Sigmoid colon (tissue), 7 donors: ENCODE measurements at regions of chr3 and their contacts with region 1.

Region 1: GRCh38 chr3:51498876-51499738 is 708 bp downstream of the DCAF1 start:
- DNase-seq: peak; percentile 98
- H3K4me3 ChIP-seq: peak overlapping the region; percentile 59 to 94 (median 92)
- H3K27ac ChIP-seq: peak overlapping the region; percentile 98 to 100 (median 98)
- H3K4me1 ChIP-seq: peaks cover 0 to 20% (median 11%) of the 10 kb centered on the region in 4 donors
- H3K27me3 ChIP-seq: no peaks in the 10 kb centered on the region
- CTCF ChIP-seq: no peak
- EP300 ChIP-seq: no peak
- POLR2A ChIP-seq: peak in 1 of 2 donors; percentile 31

Region 2: GRCh38 chr3:51391075-51391567 is 108.0 kb before region 1 on chr3 and contains the start of gene RBM15B:
- intact Hi-C with region 1: loop called (anchors 2 kb)
- DNase-seq: peak; percentile 99
- H3K4me3 ChIP-seq: peak within 1 kb of the TSS; percentile 47 to 87 (median 80)
- H3K27ac ChIP-seq: peak within 1 kb of the TSS; percentile 85 to 95 (median 90)
- H3K4me1 ChIP-seq: peaks cover 0 to 76% (median 65%) of the 10 kb centered on the region in 4 donors
- H3K27me3 ChIP-seq: no peaks in the 10 kb centered on the region
- CTCF ChIP-seq: peak in 1 of 4 experiments; percentile 81
- EP300 ChIP-seq: peak in 1 of 4 donors; percentile 58
- POLR2A ChIP-seq: no peak
- total RNA-seq, gene RBM15B: 18.9 to 29.5 (median 23.9) TPM

Region 3: DNA sequence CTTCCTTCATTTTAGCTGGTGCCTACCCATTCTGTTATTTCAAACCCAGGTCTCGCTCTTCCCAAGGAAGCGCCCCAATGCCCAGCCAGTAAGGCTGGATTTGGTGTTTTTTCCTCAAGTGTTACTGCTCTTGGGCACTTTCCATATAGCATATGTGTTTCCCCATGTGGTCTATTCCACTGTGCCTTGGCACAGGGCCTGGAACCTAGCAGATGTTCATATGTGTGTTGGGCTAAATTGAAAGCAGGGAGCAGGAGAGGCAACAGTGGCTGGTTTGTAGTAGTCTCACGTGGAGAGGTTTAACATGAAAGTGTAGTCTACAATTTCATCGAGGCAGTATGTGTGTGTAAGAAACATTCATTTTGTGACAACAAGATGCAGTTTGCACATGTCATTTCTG is 123.8 kb after region 1 on chr3:
- intact Hi-C with region 1: loop called (anchors 5 kb)
- DNase-seq: no peak
- H3K4me3 ChIP-seq: no peak overlapping the region
- H3K27ac ChIP-seq: peak overlapping the region; percentile 68 to 81 (median 78)
- H3K4me1 ChIP-seq: peaks cover 0 to 54% (median 40%) of the 10 kb centered on the region in 4 donors
- H3K27me3 ChIP-seq: no peaks in the 10 kb centered on the region
- CTCF ChIP-seq: no peak
- EP300 ChIP-seq: no peak
- POLR2A ChIP-seq: no peak

Region 4: DNA sequence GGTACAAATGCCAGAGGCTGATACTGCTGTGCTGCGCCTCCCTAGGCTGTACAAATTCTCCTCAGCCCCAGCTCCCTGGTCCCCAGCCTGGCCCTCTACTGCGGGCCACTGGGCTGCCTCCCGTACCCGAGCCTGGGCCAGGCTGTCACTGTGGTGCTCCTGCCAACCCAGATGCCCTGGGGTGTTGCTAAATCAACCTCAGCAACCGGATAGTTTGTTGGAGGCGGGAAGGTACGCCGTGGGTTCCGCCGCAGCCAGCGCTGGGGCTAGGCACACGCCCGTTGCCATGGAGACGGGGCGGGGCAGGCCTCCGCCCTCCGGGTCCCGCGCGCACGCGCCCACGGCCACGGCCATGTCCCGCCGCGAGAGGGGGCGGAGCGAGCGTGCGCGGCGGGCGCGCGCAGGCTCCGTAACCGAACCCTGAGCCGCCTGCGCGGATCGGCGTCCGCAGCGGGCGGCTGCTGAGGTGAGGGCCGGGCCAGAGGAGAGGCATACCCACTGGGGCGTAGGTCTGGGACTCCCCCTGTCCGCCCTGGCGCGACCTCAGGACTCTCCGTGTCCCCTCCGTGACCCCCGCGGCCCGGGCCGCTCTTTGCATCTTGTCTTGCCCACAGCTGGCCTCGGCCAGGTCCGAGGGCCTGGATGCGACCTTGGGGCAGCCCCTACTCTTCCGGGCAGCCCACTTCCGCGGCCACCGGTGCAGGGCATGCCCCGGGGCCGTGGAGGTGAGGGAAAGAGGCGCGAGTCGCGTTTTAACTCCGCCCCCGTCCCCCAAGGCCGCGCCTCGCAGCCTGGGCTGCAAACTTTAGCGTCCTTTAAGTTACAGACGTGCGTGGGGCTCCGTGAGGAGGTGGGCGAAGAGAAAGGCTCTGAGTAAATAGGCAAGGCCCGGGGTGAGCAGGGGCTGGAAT is 172.0 kb after region 1 on chr3 and contains the start of gene TEX264:
- intact Hi-C with region 1: loop called (anchors 1 kb)
- DNase-seq: peak; percentile 93
- H3K4me3 ChIP-seq: peak within 1 kb of the TSS; percentile 70 to 94 (median 86)
- H3K27ac ChIP-seq: peak within 1 kb of the TSS; percentile 89 to 94 (median 92)
- H3K4me1 ChIP-seq: peaks cover 0 to 48% (median 34%) of the 10 kb centered on the region in 4 donors
- H3K27me3 ChIP-seq: no peaks in the 10 kb centered on the region
- CTCF ChIP-seq: no peak
- EP300 ChIP-seq: no peak
- POLR2A ChIP-seq: peak; percentile 59 to 63
- total RNA-seq, gene TEX264: 43.2 to 72.4 (median 70.2) TPM